Psoas muscle (tissue), 8 donors: ENCODE measurements at regions of chr14 and their contacts with region 1.

Region 1: DNA sequence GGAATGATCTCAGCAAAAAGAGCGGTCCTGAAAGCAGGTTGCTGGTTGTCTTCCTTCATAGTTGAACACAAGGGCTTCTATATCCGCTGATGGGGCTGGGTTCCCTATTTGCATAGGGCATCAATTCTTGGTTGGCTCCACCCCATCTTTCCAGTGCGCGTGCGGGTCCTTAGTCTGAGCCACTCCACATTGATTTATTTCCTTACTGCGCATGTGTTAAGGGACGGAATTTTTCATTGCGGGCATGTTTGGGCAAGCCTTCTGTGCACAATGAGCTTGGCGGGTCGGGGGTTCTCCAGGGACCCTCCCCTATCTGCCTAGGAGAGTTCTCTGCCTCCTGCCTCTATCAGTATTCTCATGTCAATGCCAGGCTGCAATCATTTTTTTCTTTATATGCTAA is 21.2 kb upstream of the DLGAP5 start:
- DNase-seq: no peak
- ATAC-seq: no peak
- H3K4me3 ChIP-seq: no peak overlapping the region
- H3K27ac ChIP-seq: no peak overlapping the region
- H3K4me1 ChIP-seq: no peaks in the 10 kb centered on the region
- H3K27me3 ChIP-seq: no peaks in the 10 kb centered on the region
- CTCF ChIP-seq: no peak

Region 2: GRCh38 chr14:55354500-55354899 is 141.9 kb after region 1 on chr14:
- intact Hi-C with region 1: loop called in 1 of 2 experiments (anchors 5 kb)
- DNase-seq: peak in 1 of 2 donors; percentile 19
- ATAC-seq: peak; percentile 78 to 86 (median 81)
- H3K4me3 ChIP-seq: no peak overlapping the region
- H3K27ac ChIP-seq: peak overlapping the region; percentile 53
- H3K4me1 ChIP-seq: peaks cover 6% of the 10 kb centered on the region
- H3K27me3 ChIP-seq: no peaks in the 10 kb centered on the region
- CTCF ChIP-seq: peak; percentile 62

Region 3: GRCh38 chr14:55430024-55430690 is 217.5 kb after region 1 on chr14:
- intact Hi-C with region 1: loop called (anchors 2 to 5 kb)
- DNase-seq: no peak
- ATAC-seq: peak; percentile 84 to 98 (median 91)
- H3K4me3 ChIP-seq: no peak overlapping the region
- H3K27ac ChIP-seq: peak overlapping the region; percentile 38
- H3K4me1 ChIP-seq: no peaks in the 10 kb centered on the region
- H3K27me3 ChIP-seq: no peaks in the 10 kb centered on the region
- CTCF ChIP-seq: peak; percentile 55

Region 4: GRCh38 chr14:55609681-55610080 is 397.0 kb after region 1 on chr14:
- intact Hi-C with region 1: no loop called
- DNase-seq: no peak
- ATAC-seq: no peak
- H3K4me3 ChIP-seq: no peak overlapping the region
- H3K27ac ChIP-seq: peak overlapping the region; percentile 61
- H3K4me1 ChIP-seq: peaks cover 95% of the 10 kb centered on the region
- H3K27me3 ChIP-seq: no peaks in the 10 kb centered on the region
- CTCF ChIP-seq: no peak